Heart right ventricle (tissue), 16 donors: ENCODE measurements at regions of chr20 and their contacts with region 1.

Region 1: DNA sequence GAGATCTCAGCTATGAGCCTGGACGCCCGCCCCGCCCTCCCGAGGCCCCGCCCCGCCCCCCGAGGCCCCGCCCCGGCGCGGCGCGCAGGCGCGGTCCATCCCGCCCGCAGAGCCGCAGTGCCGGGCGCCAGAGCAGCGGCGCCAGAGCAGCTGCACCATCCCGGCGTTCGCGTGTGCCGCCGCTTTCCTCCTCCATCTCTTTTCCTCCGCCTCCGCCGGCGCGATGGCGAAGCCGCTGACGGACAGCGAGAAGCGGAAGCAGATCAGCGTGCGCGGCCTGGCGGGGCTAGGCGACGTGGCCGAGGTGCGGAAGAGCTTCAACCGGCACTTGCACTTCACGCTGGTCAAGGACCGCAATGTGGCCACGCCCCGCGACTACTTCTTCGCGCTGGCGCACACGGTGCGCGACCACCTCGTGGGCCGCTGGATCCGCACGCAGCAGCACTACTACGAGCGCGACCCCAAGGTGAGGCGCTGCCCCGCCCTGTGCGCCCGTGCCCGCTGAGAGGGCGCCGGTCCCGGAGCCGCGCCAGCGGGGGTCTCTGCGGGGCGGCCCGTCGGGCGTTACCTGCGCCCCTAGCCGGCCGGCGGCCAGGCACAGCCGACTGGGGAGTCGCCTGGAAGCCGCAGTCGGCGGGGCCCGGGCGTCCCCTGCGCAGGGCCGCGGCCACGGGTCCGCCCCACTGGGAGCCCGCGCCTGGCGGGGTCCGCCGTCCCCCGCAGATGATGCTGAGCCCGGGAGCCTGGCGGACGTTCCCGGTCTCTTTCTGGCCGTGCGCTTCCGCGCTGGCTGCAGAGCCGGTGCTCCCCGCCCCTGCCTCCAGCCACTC is at the start of gene PYGB:
- DNase-seq: peak; percentile 71 to 79
- ATAC-seq: peak; percentile 66 to 94 (median 87)
- H3K4me3 ChIP-seq: peak within 1 kb of the TSS; percentile 76 to 96 (median 93)
- H3K27ac ChIP-seq: peak within 1 kb of the TSS; percentile 92 to 98 (median 96)
- H3K4me1 ChIP-seq: peaks cover 0 to 61% (median 39%) of the 10 kb centered on the region in 9 donors
- H3K27me3 ChIP-seq: no peaks in the 10 kb centered on the region
- CTCF ChIP-seq: no peak
- total RNA-seq, gene PYGB: 203 to 462 (median 276) TPM

Region 2: GRCh38 chr20:24823989-24824693 is 424.0 kb before region 1 on chr20:
- intact Hi-C with region 1: no loop called
- DNase-seq: no peak
- ATAC-seq: no peak
- H3K4me3 ChIP-seq: no peak overlapping the region
- H3K27ac ChIP-seq: no peak overlapping the region
- H3K4me1 ChIP-seq: no peaks in the 10 kb centered on the region
- H3K27me3 ChIP-seq: peaks cover 0 to 4% (median 0%) of the 10 kb centered on the region in 7 donors
- CTCF ChIP-seq: no peak

Region 3: DNA sequence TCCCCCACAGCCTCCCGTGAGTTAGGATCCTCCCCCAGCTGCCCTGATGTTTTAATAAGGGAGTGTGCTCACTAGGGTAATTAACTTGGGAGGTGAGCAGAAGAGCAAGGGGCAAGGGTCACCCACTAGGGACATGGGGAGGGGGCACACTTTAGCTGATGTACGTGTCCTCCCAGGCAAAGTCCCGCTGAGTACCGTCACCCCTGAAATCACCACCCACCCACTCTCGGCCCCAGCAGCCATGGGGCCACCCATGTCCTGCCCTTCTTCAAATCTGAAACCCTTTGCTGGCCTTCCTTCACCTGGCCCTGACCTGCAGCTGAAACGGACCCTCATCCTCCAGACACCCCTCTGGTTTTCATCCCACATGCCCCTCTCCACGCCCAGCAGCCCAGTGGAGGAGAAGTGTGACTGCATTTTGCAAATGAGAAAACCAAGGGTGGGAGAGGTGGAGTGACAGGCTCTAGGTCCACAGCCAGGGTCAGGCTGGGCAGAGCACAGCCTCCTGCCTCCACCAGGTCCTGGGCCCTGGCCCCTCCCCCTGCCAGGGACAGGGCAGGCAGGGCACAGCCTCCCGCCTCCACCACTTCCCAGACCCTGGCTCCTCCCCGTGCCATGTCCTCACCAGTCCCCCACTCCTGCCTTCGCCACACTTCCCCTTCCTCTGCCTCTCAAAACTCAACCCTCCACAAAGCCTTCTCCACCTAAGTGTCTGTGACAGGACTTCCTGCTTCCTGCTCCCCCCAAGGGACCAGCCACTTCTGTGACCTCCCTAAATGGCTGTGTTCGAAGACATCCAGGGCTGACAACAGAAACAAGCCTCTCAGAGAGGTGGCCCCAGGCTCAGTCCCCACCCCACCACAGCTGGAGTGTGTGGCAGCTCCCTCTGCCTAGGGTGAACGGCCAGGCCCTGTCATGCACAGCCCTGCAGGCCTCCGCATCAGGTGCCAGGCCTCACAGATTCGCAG is 205.4 kb before region 1 on chr20:
- intact Hi-C with region 1: loop called in 1 of 10 experiments (anchors 10 kb)
- DNase-seq: peak; percentile 70 to 76
- ATAC-seq: peak; percentile 35 to 51 (median 41)
- H3K4me3 ChIP-seq: no peak overlapping the region
- H3K27ac ChIP-seq: peak overlapping the region; percentile 77 to 98 (median 90)
- H3K4me1 ChIP-seq: peaks cover 66 to 100% (median 97%) of the 10 kb centered on the region in 9 donors
- H3K27me3 ChIP-seq: no peaks in the 10 kb centered on the region
- CTCF ChIP-seq: no peak

Region 4: GRCh38 chr20:25126630-25127029 is 121.5 kb before region 1 on chr20:
- intact Hi-C with region 1: no loop called
- DNase-seq: no peak
- ATAC-seq: no peak
- H3K4me3 ChIP-seq: no peak overlapping the region
- H3K27ac ChIP-seq: no peak overlapping the region
- H3K4me1 ChIP-seq: no peaks in the 10 kb centered on the region
- H3K27me3 ChIP-seq: peaks cover 0 to 4% (median 0%) of the 10 kb centered on the region in 7 donors
- CTCF ChIP-seq: no peak

Region 5: DNA sequence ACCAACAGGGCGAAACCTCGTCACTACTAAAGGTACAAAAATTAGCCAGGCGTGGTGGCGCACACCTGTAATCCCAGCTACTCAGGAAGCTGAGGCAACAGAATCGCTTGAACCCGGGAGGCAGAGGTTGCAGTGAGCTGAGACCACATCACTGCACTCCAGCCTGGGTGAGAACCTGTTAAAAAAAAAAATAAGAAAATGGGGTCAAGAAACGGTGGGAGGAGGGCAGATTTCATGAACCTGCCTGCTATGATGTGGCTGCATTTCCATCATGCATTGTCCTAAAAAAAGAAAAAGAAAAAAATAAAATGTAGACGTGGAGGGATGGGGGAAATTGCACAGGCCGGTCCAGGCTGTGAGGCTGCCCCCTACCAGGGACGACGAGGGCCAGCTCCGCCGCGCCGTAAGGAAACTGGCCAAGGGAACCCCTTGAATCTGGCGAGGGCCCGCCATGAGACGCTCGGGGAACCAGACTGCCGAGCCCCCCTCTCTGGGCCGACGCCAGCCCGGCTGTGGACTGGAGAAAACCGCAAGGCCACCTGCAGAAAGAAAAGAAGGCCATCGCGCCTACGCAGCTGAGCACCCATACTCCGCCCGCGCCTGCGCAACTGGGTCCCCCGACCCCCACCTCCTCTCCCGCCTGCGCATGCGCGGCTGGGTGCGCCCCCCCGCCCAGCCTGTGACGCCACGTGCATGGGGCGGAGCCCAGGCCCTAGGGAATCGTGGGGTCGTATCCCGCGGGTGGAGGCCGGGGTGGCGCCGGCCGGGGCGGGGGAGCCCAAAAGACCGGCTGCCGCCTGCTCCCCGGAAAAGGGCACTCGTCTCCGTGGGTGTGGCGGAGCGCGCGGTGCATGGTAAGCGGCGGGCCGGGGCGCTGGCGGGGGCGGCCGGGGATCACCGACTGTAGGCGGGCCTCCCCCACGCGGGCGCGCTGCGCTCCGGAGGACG is 52.9 kb before region 1 on chr20 and contains the start of gene ENTPD6:
- intact Hi-C with region 1: loop called in 8 of 10 experiments (anchors 2 to 10 kb)
- DNase-seq: peak; percentile 92 to 97
- ATAC-seq: peak; percentile 83 to 93 (median 92)
- H3K4me3 ChIP-seq: peak within 1 kb of the TSS; percentile 75 to 99 (median 92)
- H3K27ac ChIP-seq: peak within 1 kb of the TSS; percentile 84 to 97 (median 93)
- H3K4me1 ChIP-seq: peaks cover 15 to 72% (median 51%) of the 10 kb centered on the region in 9 donors
- H3K27me3 ChIP-seq: no peaks in the 10 kb centered on the region
- CTCF ChIP-seq: peak in 5 of 9 donors; percentile 13 to 51 (median 36)
- total RNA-seq, gene ENTPD6: 54.6 to 141 (median 78.0) TPM

Region 6: DNA sequence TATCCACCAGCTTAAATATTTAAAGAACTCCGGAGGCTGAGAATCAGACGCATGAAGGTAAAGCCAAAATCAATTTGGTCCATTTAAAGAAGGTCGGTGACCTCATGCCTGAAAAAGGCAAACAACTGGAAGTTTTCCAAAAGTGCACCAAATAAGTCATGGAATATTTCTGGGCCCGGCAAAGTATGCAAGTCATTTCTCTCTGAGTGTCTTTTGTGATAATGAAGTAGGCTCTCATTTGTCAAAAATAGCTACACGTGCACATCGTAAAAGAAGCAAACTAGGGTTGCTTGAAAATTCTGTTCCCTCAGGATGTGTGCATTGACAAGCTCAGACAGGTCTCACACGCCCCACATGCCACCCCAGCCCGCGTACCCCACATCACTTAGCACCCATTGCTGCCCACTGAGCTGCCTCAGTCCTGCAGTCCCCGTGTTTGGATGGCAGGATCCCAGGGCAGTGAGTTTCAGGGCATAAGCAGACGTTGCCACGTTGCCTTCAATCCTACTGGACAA is 20.8 kb before region 1 on chr20:
- intact Hi-C with region 1: loop called in 2 of 10 experiments (anchors 1 to 2 kb)
- DNase-seq: peak in 1 of 2 donors; percentile 71
- ATAC-seq: peak; percentile 35 to 79 (median 68)
- H3K4me3 ChIP-seq: no peak overlapping the region
- H3K27ac ChIP-seq: peak overlapping the region; percentile 77 to 94 (median 90)
- H3K4me1 ChIP-seq: peaks cover 17 to 84% (median 60%) of the 10 kb centered on the region in 9 donors
- H3K27me3 ChIP-seq: no peaks in the 10 kb centered on the region
- CTCF ChIP-seq: no peak

Region 7: DNA sequence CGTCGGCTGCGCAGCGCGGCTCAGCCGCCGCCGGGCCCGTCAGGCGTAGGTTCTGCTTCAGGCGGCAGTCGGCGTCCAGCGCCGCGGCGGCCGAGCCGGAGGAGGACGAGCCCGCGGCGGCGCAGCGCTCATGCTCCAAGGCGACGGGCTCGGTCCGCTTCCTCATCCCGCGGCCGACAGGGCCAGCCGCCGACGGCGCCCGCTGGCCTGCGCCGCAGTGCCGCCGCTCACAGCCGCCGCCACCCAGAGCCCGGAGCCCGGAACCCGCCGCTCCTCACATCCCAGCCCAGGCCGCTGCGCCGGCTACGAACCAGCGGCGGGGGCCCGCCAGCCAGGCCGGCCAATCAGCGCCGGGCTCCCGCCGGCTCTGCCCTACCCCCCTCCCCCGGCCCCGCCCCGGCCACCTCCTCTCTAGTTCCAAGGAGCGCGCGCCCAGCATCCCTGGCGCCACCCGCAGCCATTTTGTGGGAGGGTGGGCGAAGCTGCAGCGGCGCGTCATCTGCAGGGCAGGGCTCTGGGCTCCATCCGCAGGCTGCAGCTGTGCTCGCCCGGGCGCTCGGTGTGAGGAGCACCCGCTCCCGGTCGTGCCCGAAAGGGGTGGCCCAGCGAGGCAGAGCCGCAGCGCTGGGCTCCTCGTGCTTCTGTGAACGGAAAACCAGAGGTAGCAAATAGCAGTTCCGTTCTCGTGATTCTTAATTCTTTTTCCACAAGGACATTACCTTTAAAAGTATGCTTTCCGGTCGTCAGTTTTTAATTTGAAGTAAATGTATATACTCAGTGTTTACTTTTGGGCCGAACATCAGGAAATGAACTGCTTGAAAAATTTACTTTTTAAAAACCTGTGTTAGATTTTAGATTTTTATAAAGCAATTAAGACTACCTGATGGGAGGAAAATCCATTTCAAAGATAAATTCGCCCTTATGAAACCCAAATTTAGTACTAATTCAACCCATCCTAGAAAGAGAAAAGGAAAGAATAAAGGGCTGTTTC is 142.7 kb after region 1 on chr20 and contains the start of gene ABHD12:
- intact Hi-C with region 1: loop called in 2 of 10 experiments (anchors 5 kb)
- DNase-seq: peak; percentile 96 to 97
- ATAC-seq: peak; percentile 98 to 100 (median 99)
- H3K4me3 ChIP-seq: peak within 1 kb of the TSS; percentile 61 to 99 (median 91)
- H3K27ac ChIP-seq: peak within 1 kb of the TSS; percentile 31 to 94 (median 88)
- H3K4me1 ChIP-seq: peaks cover 0 to 20% (median 18%) of the 10 kb centered on the region in 9 donors
- H3K27me3 ChIP-seq: no peaks in the 10 kb centered on the region
- CTCF ChIP-seq: peak in 3 of 9 donors; percentile 12 to 28 (median 15)
- total RNA-seq, gene ABHD12: 21.1 to 41.3 (median 26.9) TPM

Region 8: DNA sequence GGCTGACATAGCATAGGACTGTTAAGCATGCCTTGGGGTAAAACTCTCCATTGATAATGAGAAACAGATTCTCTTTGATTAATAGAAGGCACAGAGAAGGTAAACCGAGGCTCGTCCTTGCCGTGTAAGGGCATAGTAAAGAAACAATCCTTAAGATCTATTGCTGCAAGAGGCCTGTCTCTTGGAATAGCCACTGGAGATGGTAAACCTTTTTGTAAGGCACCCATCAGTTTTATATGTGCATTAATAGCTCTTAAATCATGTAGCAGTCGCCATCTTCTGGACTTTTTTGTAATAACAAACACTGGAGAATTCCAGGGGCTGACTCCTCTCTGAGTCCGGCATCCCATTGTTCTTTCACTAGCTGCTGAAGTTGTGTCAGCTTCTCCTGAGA is 150.9 kb after region 1 on chr20:
- intact Hi-C with region 1: loop called in 2 of 10 experiments (anchors 5 kb)
- DNase-seq: peak in 1 of 2 donors; percentile 31
- ATAC-seq: peak; percentile 75 to 92 (median 87)
- H3K4me3 ChIP-seq: no peak overlapping the region
- H3K27ac ChIP-seq: no peak overlapping the region
- H3K4me1 ChIP-seq: no peaks in the 10 kb centered on the region
- H3K27me3 ChIP-seq: no peaks in the 10 kb centered on the region
- CTCF ChIP-seq: peak; percentile 31 to 78 (median 63)